ENCODE measurements at regions of chr3 and their contacts with region 1.

Region 1: DNA sequence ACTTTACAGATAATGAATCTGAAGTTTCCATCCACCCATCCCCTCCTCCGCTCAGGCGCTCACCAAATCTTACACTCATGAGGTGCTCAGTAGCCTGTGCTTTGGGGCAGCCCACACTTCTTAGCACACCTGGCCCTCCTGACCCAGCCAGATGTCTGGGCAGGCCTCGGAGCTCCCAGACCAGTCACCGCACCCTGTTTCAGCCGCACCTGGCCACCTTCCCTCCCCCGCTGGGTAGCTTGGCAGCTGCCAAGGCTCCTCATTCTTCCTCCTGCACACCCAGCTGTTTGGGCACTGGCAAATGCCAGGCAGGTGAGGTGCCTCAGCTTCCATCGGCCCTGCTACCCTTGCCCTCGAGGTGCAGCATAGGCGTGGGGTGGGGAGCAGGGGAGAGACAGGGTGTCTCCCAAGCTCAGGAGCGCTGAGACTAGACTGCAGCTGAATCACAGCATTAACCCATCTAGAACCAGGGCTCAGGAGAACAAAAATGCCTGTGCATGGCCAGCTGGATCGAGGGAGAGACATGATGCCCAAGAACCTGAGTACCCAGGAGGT is 45.8 kb downstream of the CDC25A start:
- DNase-seq: peak in 1 of 2 donors; percentile 32
- H3K4me3 ChIP-seq: no peak overlapping the region
- H3K27ac ChIP-seq: no peak overlapping the region
- H3K4me1 ChIP-seq: no peaks in the 10 kb centered on the region
- H3K27me3 ChIP-seq: no peaks in the 10 kb centered on the region
- CTCF ChIP-seq: no peak
- POLR2A ChIP-seq: no peak

Region 2: GRCh38 chr3:47612178-47612577 is 530.2 kb before region 1 on chr3:
- intact Hi-C with region 1: no loop called
- DNase-seq: no peak
- H3K4me3 ChIP-seq: no peak overlapping the region
- H3K27ac ChIP-seq: peak overlapping the region in 1 of 2 donors; percentile 4
- H3K4me1 ChIP-seq: no peaks in the 10 kb centered on the region
- H3K27me3 ChIP-seq: no peaks in the 10 kb centered on the region
- CTCF ChIP-seq: no peak
- POLR2A ChIP-seq: no peak

Region 3: DNA sequence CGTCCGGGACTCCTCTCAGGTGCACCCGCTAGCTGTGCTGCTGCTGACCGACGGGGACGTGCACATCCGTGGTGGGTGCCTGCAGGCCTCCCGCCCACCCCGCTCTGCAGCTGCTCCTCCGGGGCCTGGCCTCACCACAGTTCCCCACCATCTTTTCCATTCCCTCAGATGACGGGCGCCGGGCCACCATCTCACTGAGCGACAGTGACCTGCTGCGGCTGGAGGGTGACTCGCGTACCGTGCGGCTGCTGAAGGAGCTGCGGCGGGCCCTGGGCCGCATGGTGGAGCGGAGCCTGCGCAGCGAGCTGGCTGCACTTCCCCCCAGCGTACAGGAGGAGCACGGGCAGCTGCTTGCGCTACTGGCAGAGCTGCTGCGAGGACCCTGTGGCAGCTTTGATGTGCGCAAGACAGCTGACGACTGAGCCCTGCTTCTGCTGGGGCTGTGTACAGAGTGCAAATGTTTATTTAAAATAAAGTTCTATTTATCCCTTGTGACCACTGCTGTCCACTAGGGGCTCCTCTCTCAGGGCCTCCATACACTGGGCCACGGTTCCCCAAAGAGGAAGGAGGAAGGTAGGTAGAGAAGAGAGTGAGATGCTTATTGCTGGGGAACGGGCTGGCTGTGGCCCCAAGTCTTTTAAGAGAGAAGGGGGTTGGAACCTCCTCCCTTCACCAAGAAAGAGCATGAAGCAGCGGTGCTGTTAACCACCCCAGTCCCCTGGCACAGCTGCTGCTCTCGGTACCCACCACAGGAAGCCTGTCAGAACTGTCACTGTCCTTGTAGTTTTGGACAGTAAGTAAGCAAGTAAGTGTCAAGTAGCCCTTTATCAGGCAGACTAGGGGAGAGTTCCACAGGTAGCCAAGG is 292.5 kb before region 1 on chr3:
- intact Hi-C with region 1: loop called (anchors 5 kb)
- DNase-seq: no peak
- H3K4me3 ChIP-seq: no peak overlapping the region
- H3K27ac ChIP-seq: no peak overlapping the region
- H3K4me1 ChIP-seq: no peaks in the 10 kb centered on the region
- H3K27me3 ChIP-seq: no peaks in the 10 kb centered on the region
- CTCF ChIP-seq: peak in 2 of 3 donors; percentile 11 to 24
- POLR2A ChIP-seq: no peak

Region 4: DNA sequence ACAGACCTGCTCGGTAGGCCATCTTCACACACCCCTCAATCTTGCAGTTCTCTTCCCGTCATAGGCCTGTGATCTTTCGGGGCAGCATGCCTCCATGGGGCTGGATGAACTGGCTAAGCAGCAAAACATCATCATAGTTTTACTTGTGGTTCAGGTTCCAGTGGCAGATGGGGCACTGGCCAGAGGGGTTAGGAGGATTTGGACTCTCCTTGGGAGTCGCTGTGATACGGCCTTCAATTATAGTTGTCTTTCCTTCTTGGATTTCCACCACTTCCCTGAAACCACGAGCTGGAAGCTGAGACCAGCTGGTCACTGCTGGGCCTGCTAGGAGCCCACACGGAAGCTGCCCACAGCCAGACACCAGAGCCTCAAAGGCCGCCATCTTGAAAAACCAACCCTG is 114.2 kb after region 1 on chr3:
- intact Hi-C with region 1: no loop called
- DNase-seq: no peak
- H3K4me3 ChIP-seq: no peak overlapping the region
- H3K27ac ChIP-seq: no peak overlapping the region
- H3K4me1 ChIP-seq: no peaks in the 10 kb centered on the region
- H3K27me3 ChIP-seq: no peaks in the 10 kb centered on the region
- CTCF ChIP-seq: no peak
- POLR2A ChIP-seq: no peak